GM18951 (cell line): ENCODE measurements at regions of chr6 and their contacts with region 1.

Region 1: DNA sequence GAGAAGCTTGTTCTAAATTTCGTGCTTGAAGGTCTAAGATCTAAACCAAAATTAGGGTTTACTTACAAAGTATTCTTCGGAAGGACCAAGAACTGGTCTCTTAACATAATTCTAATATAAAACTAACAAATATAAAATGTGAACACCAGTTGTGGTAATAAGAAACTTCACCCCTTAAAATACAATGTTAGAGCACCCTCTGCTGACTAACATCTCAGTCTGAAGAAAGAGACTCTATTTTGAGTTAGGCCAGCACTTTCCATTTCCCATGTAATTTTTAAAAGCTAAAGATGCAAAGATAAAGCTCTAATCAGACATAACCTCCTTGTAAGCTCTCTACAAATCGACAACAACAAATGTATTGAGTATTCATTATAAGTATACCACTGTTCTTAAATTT is 24.6 kb downstream of the ATG5 start:
- POLR2A ChIP-seq: no peak

Region 2: DNA sequence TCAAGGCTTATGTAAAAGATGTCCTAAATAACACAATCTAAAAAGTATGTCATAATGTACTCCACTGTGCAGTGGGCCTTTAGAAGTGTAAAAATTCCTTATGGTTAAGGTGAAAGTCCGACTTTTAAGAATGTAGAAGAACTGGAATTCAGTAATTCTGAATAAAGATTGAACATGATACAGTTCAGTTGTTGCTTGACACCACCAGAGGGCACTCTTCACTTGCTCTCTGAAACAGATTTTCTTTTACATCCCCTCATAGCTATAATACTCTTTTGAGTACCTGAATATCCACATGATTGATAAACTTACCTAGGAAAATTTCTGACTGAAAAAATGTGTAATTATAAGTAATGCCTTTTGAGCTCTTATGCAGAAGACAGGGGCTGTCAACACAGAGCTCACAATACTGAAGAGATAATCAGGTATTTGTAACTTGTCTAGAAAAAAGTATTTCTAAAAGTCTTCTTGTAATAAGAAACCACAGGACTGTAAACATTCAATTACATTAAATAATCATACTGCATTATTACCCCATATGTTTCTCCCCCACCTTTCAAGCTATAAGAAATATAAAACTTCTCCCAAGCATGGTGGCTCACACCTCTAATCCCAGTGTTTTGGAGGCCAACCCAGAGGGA is 1213.3 kb before region 1 on chr6:
- in situ Hi-C with region 1: loop called (anchors 25 kb)
- POLR2A ChIP-seq: no peak

Region 3: DNA sequence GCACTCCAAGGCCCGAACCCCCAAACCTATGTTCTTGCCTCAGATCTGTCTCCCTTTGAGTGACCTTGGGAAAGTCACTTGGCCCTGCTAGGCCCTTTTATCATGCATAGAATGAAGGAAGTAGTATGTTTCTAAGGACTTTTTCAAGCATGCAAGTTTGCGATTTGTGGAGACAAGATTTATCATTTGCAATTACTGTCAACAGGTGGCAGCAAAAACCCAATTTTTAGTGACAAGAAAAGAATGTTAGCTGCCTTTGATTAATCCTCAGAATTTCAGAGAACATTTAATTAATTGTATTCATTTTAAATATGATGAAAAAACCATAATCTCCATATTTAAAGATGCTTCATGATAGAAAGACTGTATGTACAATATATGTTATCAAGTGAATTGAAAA is 869.7 kb before region 1 on chr6:
- in situ Hi-C with region 1: loop called (anchors 10 kb)
- POLR2A ChIP-seq: no peak

Region 4: DNA sequence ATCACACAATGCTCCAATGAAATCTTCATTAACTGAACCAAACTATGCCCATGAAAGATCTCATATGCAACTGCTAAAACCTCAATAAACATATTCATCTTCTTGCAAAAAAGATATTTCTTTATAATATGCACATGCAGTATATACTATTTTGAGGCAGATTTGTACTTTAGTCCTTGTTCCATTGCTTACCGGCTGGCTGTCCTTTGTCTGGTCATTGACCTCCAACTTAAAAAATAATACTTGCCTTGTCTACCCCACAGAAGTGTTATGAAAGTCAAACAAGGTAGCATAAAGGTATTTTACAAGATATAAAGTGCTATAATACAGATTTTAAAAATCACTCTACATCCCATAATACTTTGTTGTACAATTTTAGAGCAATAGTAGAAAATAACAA is 63.7 kb before region 1 on chr6:
- in situ Hi-C with region 1: loop called (anchors 10 kb)
- POLR2A ChIP-seq: no peak